CD4-positive, alpha-beta memory T cell (primary cell): ENCODE measurements at regions of chr14 and their contacts with region 1.

Region 1: DNA sequence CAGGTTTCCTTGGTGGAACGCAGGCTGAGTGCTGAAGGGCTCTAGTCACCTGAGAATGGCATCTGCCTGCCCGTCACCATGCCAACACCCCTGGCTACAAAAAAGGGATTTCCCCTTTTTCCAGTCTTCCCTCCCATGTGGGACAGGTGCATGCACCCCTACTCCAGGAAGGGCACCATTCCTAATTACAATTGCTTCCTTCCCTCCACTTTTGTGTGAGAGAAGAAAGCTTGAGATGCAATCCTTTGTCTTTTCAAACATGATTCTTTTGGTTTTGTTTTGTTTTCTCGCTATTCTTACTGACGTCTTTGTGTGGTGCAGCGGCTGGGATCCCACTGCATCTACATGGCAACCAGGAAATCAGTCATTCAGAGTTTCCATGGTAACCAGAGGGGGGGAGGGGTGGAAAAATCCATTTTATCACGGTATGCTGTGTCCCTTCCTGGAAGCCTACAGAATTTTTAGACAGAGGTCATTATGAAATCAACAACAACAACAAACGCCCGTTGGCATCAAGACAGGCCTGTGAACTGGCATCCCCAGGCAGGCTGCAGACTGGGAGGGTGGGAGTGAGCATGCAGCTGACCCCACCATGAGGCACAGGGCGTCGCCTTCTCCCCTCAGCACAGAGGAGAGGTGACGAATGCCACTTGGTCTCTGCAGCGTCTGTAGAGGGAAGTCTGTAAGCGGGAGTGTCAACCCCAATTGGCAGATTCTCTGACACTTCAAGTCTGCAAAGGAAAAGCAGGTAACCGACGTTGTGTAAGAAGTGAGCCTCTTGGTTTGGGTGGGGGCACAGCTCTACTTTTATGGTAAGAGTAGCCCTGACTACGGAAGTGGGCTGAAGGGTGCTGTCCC is 13.6 kb upstream of the GNG2 start:
- DNase-seq: peak; percentile 92 to 99 (median 96)
- H3K4me3 ChIP-seq: peak overlapping the region; percentile 14 to 72
- H3K4me3 Mint-ChIP-seq: peak overlapping the region; percentile 85 to 98 (median 91)
- H3K27ac ChIP-seq: peak overlapping the region; percentile 92
- H3K27ac Mint-ChIP-seq: peak overlapping the region; percentile 98 to 100 (median 99)
- H3K4me1 ChIP-seq: peaks cover 51% of the 10 kb centered on the region
- H3K4me1 Mint-ChIP-seq: peaks cover 46 to 73% (median 52%) of the 10 kb centered on the region in 4 donors
- H3K27me3 ChIP-seq: no peaks in the 10 kb centered on the region
- H3K27me3 Mint-ChIP-seq: peaks cover 2% of the 10 kb centered on the region in 2 donors

Region 2: DNA sequence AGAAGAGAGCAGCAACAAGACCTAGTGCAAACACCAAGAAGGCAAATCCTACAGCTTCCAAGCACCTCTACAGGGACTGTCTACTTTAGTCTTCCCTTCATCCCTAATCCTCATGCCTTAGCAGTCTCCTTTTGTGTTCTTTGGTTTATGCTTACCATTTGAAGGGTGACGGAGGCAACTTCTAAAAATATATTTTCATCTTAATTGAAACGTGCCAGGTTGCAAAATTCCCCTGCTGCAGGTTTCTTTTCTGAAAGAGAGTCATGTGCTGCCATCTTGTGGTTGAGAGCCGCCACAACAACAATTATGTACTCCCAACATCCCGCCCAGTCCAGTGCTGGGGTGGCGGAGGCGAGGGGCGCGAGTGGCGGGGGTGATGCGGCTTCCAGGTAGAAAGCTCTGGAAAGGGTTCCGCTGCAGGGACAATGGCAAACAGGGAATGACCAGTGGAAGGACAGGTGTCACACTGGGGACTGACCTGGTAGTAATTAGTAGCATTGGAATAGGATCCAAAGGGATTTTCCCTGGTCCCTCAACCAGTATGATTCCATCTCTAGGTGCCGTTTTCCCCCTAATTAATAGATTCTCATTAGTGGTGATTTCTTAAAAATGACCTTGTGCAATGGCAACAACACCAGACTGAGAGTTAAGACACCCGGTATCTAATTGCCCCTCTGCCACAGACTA is 66.7 kb before region 1 on chr14:
- CTCF ChIA-PET with region 1: interaction called, 3 read pairs
- POLR2A ChIA-PET with region 1: no interaction called
- intact Hi-C with region 1: loop called (anchors 1 kb)
- DNase-seq: peak; percentile 64 to 70 (median 69)
- H3K4me3 ChIP-seq: no peak overlapping the region
- H3K4me3 Mint-ChIP-seq: peak overlapping the region in 1 of 8 donors; percentile 71
- H3K27ac ChIP-seq: no peak overlapping the region
- H3K27ac Mint-ChIP-seq: peak overlapping the region in 2 of 7 donors; percentile 2 to 75
- H3K4me1 ChIP-seq: peaks cover 8% of the 10 kb centered on the region
- H3K4me1 Mint-ChIP-seq: peaks cover 12 to 16% (median 13%) of the 10 kb centered on the region in 4 donors
- H3K27me3 ChIP-seq: no peaks in the 10 kb centered on the region
- H3K27me3 Mint-ChIP-seq: peaks cover 18 to 21% of the 10 kb centered on the region in 2 donors

Region 3: DNA sequence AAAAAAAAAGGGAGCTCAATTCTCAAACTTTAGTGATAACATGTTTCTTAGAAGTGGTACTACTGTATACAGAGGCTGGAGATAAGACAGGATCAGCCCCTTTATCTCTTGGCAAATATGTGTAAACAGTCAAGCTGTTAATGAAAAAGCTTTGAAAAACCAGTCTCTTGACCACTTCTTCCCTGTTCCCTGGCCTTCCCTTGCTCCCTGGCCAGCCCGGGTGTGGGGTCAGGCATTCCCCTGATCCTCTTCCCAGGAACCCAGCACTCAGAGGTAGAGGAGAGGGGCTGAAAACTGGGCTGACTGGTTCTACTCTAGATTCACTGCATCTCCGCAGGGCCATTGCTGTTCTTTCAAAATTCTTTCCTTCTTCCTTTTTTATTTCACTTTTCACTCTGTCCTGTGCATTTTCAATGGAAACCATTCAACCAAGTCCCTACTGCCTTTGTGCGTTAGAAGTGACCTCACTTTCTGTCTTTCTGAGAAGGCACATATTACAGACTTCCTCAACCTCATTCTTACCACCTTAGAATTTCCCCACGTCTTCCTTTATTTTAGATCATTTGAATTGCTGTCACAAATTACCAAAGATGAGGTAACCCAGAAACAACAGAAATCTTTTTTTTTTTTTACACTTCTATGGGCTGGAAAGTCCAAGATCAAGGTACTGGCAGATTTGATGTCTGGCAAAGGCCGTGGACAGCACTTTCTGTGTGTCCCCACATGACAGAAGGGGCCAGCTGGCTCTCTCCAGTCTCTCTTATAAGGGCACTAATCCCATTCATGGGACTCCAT is 19.3 kb after region 1 on chr14:
- CTCF ChIA-PET with region 1: interaction called, 25 read pairs
- POLR2A ChIA-PET with region 1: interaction called, 285 read pairs
- intact Hi-C with region 1: no loop called
- DNase-seq: peak; percentile 47 to 68 (median 54)
- H3K4me3 ChIP-seq: peak overlapping the region in 1 of 2 donors; percentile 12
- H3K4me3 Mint-ChIP-seq: no peak overlapping the region
- H3K27ac ChIP-seq: peak overlapping the region; percentile 52
- H3K27ac Mint-ChIP-seq: no peak overlapping the region
- H3K4me1 ChIP-seq: peaks cover 81% of the 10 kb centered on the region
- H3K4me1 Mint-ChIP-seq: peaks cover 24 to 40% (median 31%) of the 10 kb centered on the region in 4 donors
- H3K27me3 ChIP-seq: no peaks in the 10 kb centered on the region
- H3K27me3 Mint-ChIP-seq: no peaks in the 10 kb centered on the region

Region 4: GRCh38 chr14:51884086-51884927 is 37.4 kb after region 1 on chr14:
- CTCF ChIA-PET with region 1: interaction called, 3 read pairs
- POLR2A ChIA-PET with region 1: interaction called, 23 read pairs
- intact Hi-C with region 1: loop called (anchors 5 kb)
- DNase-seq: no peak
- H3K4me3 ChIP-seq: no peak overlapping the region
- H3K4me3 Mint-ChIP-seq: peak overlapping the region; percentile 26 to 86 (median 52)
- H3K27ac ChIP-seq: peak overlapping the region; percentile 12
- H3K27ac Mint-ChIP-seq: peak overlapping the region; percentile 43 to 83 (median 78)
- H3K4me1 ChIP-seq: peaks cover 89% of the 10 kb centered on the region
- H3K4me1 Mint-ChIP-seq: peaks cover 49 to 89% (median 73%) of the 10 kb centered on the region in 4 donors
- H3K27me3 ChIP-seq: no peaks in the 10 kb centered on the region
- H3K27me3 Mint-ChIP-seq: no peaks in the 10 kb centered on the region

Region 5: GRCh38 chr14:51908086-51908485 is 61.2 kb after region 1 on chr14:
- CTCF ChIA-PET with region 1: interaction called, 4 read pairs
- POLR2A ChIA-PET with region 1: interaction called, 17 read pairs
- intact Hi-C with region 1: loop called (anchors 1 kb)
- DNase-seq: no peak
- H3K4me3 ChIP-seq: no peak overlapping the region
- H3K4me3 Mint-ChIP-seq: no peak overlapping the region
- H3K27ac ChIP-seq: no peak overlapping the region
- H3K27ac Mint-ChIP-seq: peak overlapping the region in 4 of 7 donors; percentile 23 to 89 (median 54)
- H3K4me1 ChIP-seq: peaks cover 49% of the 10 kb centered on the region
- H3K4me1 Mint-ChIP-seq: peaks cover 40 to 70% (median 59%) of the 10 kb centered on the region in 4 donors
- H3K27me3 ChIP-seq: no peaks in the 10 kb centered on the region
- H3K27me3 Mint-ChIP-seq: no peaks in the 10 kb centered on the region

Region 6: GRCh38 chr14:51979088-51979709 is 132.3 kb after region 1 on chr14:
- CTCF ChIA-PET with region 1: interaction called, 18 read pairs
- POLR2A ChIA-PET with region 1: interaction called, 7 read pairs
- intact Hi-C with region 1: loop called (anchors 1 kb)
- DNase-seq: peak; percentile 71 to 76 (median 73)
- H3K4me3 ChIP-seq: no peak overlapping the region
- H3K4me3 Mint-ChIP-seq: peak overlapping the region in 1 of 8 donors; percentile 34
- H3K27ac ChIP-seq: no peak overlapping the region
- H3K27ac Mint-ChIP-seq: peak overlapping the region in 2 of 7 donors; percentile 47 to 48
- H3K4me1 ChIP-seq: peaks cover 7% of the 10 kb centered on the region
- H3K4me1 Mint-ChIP-seq: peaks cover 0 to 6% (median 5%) of the 10 kb centered on the region in 4 donors
- H3K27me3 ChIP-seq: no peaks in the 10 kb centered on the region
- H3K27me3 Mint-ChIP-seq: no peaks in the 10 kb centered on the region